ENCODE measurements at regions of chr6 and their contacts with region 1.

Region 1: DNA sequence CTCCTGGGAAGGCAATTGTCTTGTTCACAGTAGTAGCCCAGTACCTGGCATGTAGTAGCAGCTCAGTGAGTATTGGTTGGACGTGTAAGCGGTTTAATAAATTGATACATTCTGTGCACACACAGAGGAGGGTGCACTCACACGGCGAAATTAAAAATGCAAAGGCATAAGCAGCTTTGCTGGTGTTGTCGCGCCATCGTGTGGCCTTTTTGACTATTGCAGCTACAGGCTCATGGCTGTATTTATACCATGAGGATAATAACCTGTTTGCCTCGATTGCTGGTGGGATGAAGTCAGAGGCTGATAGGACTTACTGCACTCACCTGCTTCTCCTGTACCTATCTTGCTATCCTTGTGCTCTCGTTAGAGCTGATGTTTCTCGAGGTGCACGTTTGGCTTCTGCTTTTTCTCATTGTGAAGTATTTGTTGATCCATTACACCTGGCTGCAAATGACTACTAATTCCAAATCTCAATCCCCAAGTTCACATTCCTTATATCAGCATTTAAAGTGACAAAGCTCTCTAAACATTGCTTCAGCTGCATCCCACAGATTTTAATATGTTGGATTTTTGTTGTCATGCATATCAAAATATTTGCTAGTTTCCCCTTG is 61.5 kb downstream of the TBXT start:
- DNase-seq: peak; percentile 59 to 88 (median 84)
- H3K4me3 ChIP-seq: no peak overlapping the region
- H3K27ac ChIP-seq: no peak overlapping the region
- H3K4me1 ChIP-seq: no peaks in the 10 kb centered on the region
- H3K27me3 ChIP-seq: no peaks in the 10 kb centered on the region
- CTCF ChIP-seq: peak; percentile 70 to 93 (median 90)
- EP300 ChIP-seq: no peak
- POLR2A ChIP-seq: no peak

Region 2: DNA sequence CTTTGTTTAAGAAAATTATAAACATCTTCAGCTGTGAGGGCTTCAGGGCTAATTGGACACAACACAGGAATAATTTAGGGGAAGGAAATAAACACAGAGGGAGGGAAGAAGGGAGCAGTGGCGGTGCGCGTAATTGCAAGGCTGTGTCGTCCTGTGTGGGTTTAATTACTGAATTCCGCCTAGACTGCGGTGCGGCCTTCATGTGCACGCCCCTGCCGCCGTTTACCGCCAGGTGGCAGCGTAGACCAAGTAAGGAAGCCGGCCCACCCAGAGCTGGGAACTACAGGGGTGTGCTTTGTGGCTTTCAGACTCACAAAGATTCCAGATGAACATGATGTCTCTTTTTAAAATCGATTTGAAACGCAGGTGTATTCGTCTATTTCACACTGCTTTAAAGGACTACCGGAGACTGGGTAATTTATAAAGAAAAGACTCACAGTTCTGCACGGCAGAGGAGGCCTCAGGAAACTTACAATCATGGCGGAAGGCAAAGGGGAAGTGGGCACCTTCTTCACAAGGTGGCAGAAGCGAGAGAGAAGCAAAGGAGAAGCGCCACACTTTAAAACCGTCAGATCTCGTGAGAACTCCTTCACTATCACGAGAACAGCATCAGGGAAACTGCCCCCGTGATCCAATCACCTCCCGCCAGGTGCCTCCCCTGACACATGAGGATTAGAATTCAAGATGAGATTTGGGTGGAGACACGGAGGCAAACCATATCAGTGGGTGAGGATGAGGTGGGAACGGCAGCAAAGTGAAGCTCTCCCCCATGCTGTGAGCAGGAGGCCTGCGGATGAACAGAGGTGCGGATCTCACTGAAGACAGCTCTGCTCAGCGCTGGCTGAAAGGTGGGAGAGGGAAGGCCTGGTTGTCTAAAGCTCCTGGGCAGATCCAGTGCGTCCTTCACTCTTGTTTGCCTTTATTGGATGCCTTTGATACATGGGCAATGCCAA is 221.1 kb before region 1 on chr6:
- intact Hi-C with region 1: loop called in 3 of 4 experiments (anchors 2 to 5 kb)
- DNase-seq: peak; percentile 76 to 93 (median 90)
- H3K4me3 ChIP-seq: no peak overlapping the region
- H3K27ac ChIP-seq: no peak overlapping the region
- H3K4me1 ChIP-seq: no peaks in the 10 kb centered on the region
- H3K27me3 ChIP-seq: no peaks in the 10 kb centered on the region
- CTCF ChIP-seq: peak; percentile 55 to 93 (median 92)
- EP300 ChIP-seq: no peak
- POLR2A ChIP-seq: peak; percentile 11

Region 3: GRCh38 chr6:166167801-166168615 is 61.8 kb after region 1 on chr6 and contains the start of gene TBXT:
- intact Hi-C with region 1: no loop called
- DNase-seq: no peak
- H3K4me3 ChIP-seq: no peak within 1 kb of the TSS
- H3K27ac ChIP-seq: no peak within 1 kb of the TSS
- H3K4me1 ChIP-seq: peaks cover 3% of the 10 kb centered on the region
- H3K27me3 ChIP-seq: peaks cover 3% of the 10 kb centered on the region
- CTCF ChIP-seq: no peak
- EP300 ChIP-seq: no peak
- POLR2A ChIP-seq: no peak
- total RNA-seq, gene TBXT: not detected